GM12878 (cell line): ENCODE measurements at regions of chr5 and their contacts with region 1.

Region 1: GRCh38 chr5:58491216-58491892 is at the start of gene GAPT:
- DNase-seq: peak; percentile 9
- ATAC-seq: peak; percentile 80
- H3K4me3 ChIP-seq: no peak within 1 kb of the TSS
- H3K27ac ChIP-seq: no peak within 1 kb of the TSS
- H3K4me1 ChIP-seq: no peaks in the 10 kb centered on the region
- H3K27me3 ChIP-seq: no peaks in the 10 kb centered on the region; a peak in 1 of 4 replicates
- CTCF ChIP-seq: no peak
- EP300 ChIP-seq: no peak
- POLR2A ChIP-seq: no peak
- RAD21 ChIP-seq: no peak
- polyA plus RNA-seq, gene GAPT: 0.47 to 0.79 TPM

Region 2: GRCh38 chr5:58505971-58506640 is 14.8 kb after region 1 on chr5:
- CTCF ChIA-PET with region 1: interaction called, 5 read pairs
- POLR2A ChIA-PET with region 1: no interaction called
- RAD21 ChIA-PET with region 1: no interaction called
- SMC1A ChIA-PET with region 1: interaction called, 10 read pairs
- in situ Hi-C with region 1: no loop called
- intact Hi-C with region 1: no loop called
- DNase-seq: no peak
- ATAC-seq: peak; percentile 62
- H3K4me3 ChIP-seq: no peak overlapping the region
- H3K27ac ChIP-seq: no peak overlapping the region
- H3K4me1 ChIP-seq: peaks cover 5% of the 10 kb centered on the region
- H3K27me3 ChIP-seq: no peaks in the 10 kb centered on the region
- CTCF ChIP-seq: no peak
- EP300 ChIP-seq: no peak
- POLR2A ChIP-seq: no peak
- RAD21 ChIP-seq: no peak